ENCODE measurements at regions of chr19 and their contacts with region 1.

Region 1: DNA sequence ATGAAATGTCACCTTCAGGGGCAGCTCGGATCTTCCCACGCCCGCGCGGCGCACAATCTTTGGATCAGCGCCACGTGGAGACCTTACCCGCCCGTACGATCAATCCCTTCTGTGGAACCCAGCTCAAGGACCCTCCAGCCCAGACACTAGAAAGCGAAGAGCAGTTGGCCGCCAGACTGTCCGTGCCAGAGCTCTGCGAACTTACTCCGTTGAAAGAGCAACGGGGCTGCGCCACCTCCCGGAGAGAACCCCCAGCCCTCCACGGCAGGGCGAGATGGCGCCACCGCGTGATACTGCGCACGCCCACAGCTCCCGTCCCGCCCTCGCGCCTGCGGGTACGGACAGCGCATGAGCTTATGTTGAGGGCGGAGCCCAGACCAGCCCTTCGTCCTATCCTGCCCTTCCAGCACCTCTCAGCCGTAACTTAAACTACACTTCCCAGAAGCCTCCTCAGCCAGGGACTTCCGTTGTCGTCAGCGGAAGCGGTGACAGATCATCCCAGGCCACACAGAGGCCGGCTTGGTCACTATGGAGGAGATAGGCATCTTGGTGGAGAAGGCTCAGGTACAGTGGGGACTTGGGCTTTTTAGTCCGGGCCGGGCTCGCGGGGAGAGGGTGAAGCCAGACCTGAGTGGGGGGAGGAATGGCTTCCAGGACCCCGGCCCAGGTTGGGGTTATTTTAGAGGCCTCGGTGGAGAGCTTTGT is at the start of gene PSMC4:
- DNase-seq: peak; percentile 100
- ATAC-seq: peak; percentile 97 to 99
- H3K4me3 ChIP-seq: peak within 1 kb of the TSS; percentile 70
- H3K27ac ChIP-seq: peak within 1 kb of the TSS; percentile 91
- H3K4me1 ChIP-seq: peaks cover 18% of the 10 kb centered on the region
- CTCF ChIP-seq: peak; percentile 99
- EP300 ChIP-seq: no peak
- POLR2A ChIP-seq: peak; percentile 81
- RAD21 ChIP-seq: peak; percentile 99 to 100
- polyA plus RNA-seq, gene PSMC4: 192 and 208 TPM in 2 replicates

Region 2: GRCh38 chr19:39765091-39766076 is 205.4 kb before region 1 on chr19:
- CTCF ChIA-PET with region 1: interaction called, 33 read pairs
- POLR2A ChIA-PET with region 1: no interaction called
- DNase-seq: peak; percentile 41 to 82
- ATAC-seq: peak; percentile 55 to 77; a peak in 3 of 6 replicates
- H3K4me3 ChIP-seq: no peak overlapping the region
- H3K27ac ChIP-seq: no peak overlapping the region
- H3K4me1 ChIP-seq: no peaks in the 10 kb centered on the region
- CTCF ChIP-seq: peak; percentile 94
- EP300 ChIP-seq: no peak
- POLR2A ChIP-seq: no peak
- RAD21 ChIP-seq: peak; percentile 39 to 63; a peak in 3 of 5 replicates

Region 3: GRCh38 chr19:39846176-39846677 is 124.6 kb before region 1 on chr19 and contains the start of gene FBL:
- CTCF ChIA-PET with region 1: interaction called, 137 read pairs
- POLR2A ChIA-PET with region 1: interaction called, 28 read pairs
- DNase-seq: peak; percentile 96 to 100
- ATAC-seq: peak; percentile 79 to 91
- H3K4me3 ChIP-seq: peak within 1 kb of the TSS; percentile 86
- H3K27ac ChIP-seq: peak within 1 kb of the TSS; percentile 87 to 90
- H3K4me1 ChIP-seq: peaks cover 44% of the 10 kb centered on the region
- CTCF ChIP-seq: no peak; the same call in 2 of the 3 replicates
- EP300 ChIP-seq: no peak
- POLR2A ChIP-seq: peak; percentile 99
- RAD21 ChIP-seq: no peak
- polyA plus RNA-seq, gene FBL: 716 and 970 TPM in 2 replicates

Region 4: GRCh38 chr19:39906820-39907611 is 63.8 kb before region 1 on chr19:
- CTCF ChIA-PET with region 1: interaction called, 26 read pairs
- POLR2A ChIA-PET with region 1: interaction called, 12 read pairs
- DNase-seq: peak in 1 of 2 experiments; percentile 54
- ATAC-seq: no peak
- H3K4me3 ChIP-seq: no peak overlapping the region
- H3K27ac ChIP-seq: peak overlapping the region; percentile 75 to 86; a peak in 5 of 6 replicates
- H3K4me1 ChIP-seq: peaks cover 28% of the 10 kb centered on the region
- CTCF ChIP-seq: no peak; the same call in 2 of the 3 replicates
- EP300 ChIP-seq: no peak
- POLR2A ChIP-seq: no peak
- RAD21 ChIP-seq: no peak

Region 5: GRCh38 chr19:39941615-39942365 is 29.0 kb before region 1 on chr19:
- CTCF ChIA-PET with region 1: interaction called, 31 read pairs
- POLR2A ChIA-PET with region 1: interaction called, 10 read pairs
- DNase-seq: no peak
- ATAC-seq: no peak
- H3K4me3 ChIP-seq: no peak overlapping the region
- H3K27ac ChIP-seq: peak overlapping the region; percentile 82 to 87
- H3K4me1 ChIP-seq: peaks cover 62% of the 10 kb centered on the region
- CTCF ChIP-seq: no peak
- EP300 ChIP-seq: no peak
- POLR2A ChIP-seq: no peak
- RAD21 ChIP-seq: no peak

Region 6: DNA sequence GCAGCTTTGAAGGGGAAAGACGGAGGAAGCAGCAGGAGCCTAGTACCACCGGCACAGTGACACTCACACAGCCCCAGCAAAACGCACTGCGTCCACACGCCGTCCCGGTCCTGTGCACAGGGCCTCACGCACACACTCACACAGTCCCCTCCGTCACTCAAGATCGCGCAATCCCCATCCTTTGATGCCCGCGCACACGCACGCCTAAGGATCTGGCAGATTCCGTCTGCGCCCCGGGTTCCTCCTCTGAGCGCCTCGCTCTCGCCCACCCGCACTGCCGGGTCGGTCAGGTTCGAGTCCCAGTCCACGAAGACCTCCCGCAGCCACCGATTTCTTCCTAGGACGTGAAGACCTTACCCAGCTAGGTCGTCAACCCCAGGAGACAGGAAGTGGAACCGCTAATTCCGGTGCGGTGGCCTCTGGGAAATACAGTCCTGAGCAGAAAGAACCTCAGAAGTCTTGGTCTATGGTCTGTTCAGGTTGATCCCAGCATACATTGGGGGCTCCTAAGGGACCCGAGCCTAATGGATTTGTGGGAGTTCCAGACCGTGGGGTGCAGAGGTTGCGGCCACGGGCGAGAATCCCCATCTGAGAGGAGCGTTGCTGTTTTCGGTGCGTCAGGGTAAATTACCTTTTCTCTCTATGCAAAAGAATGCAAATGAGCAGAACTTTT is 85.1 kb after region 1 on chr19 and contains the start of gene ZNF780B:
- CTCF ChIA-PET with region 1: interaction called, 11 read pairs
- POLR2A ChIA-PET with region 1: interaction called, 4 read pairs
- DNase-seq: peak; percentile 84 to 93
- ATAC-seq: peak; percentile 97 to 99
- H3K4me3 ChIP-seq: peak within 1 kb of the TSS; percentile 62
- H3K27ac ChIP-seq: peak within 1 kb of the TSS; percentile 67 to 84
- H3K4me1 ChIP-seq: 0 out of 3 replicates have a peak, but pooled peaks cover 4% of the 10 kb centered on the region
- CTCF ChIP-seq: no peak
- EP300 ChIP-seq: no peak
- POLR2A ChIP-seq: peak; percentile 52; the same call in 1 of the 2 replicates
- RAD21 ChIP-seq: no peak
- polyA plus RNA-seq, gene ZNF780B: 10.0 and 15.7 TPM in 2 replicates

Region 7: GRCh38 chr19:40110570-40110969 is 139.7 kb after region 1 on chr19:
- CTCF ChIA-PET with region 1: no interaction called
- POLR2A ChIA-PET with region 1: no interaction called
- DNase-seq: no peak
- ATAC-seq: no peak
- H3K4me3 ChIP-seq: no peak overlapping the region
- H3K27ac ChIP-seq: no peak overlapping the region
- H3K4me1 ChIP-seq: no peaks in the 10 kb centered on the region
- CTCF ChIP-seq: no peak
- EP300 ChIP-seq: no peak
- POLR2A ChIP-seq: no peak
- RAD21 ChIP-seq: no peak

Region 8: GRCh38 chr19:40322871-40323615 is 352.2 kb after region 1 on chr19:
- CTCF ChIA-PET with region 1: no interaction called
- POLR2A ChIA-PET with region 1: no interaction called
- DNase-seq: no peak
- ATAC-seq: no peak; a peak in 2 of 6 replicates
- H3K4me3 ChIP-seq: no peak overlapping the region
- H3K27ac ChIP-seq: no peak overlapping the region
- H3K4me1 ChIP-seq: no peaks in the 10 kb centered on the region
- CTCF ChIP-seq: no peak
- EP300 ChIP-seq: no peak
- POLR2A ChIP-seq: no peak
- RAD21 ChIP-seq: no peak

Region 9: DNA sequence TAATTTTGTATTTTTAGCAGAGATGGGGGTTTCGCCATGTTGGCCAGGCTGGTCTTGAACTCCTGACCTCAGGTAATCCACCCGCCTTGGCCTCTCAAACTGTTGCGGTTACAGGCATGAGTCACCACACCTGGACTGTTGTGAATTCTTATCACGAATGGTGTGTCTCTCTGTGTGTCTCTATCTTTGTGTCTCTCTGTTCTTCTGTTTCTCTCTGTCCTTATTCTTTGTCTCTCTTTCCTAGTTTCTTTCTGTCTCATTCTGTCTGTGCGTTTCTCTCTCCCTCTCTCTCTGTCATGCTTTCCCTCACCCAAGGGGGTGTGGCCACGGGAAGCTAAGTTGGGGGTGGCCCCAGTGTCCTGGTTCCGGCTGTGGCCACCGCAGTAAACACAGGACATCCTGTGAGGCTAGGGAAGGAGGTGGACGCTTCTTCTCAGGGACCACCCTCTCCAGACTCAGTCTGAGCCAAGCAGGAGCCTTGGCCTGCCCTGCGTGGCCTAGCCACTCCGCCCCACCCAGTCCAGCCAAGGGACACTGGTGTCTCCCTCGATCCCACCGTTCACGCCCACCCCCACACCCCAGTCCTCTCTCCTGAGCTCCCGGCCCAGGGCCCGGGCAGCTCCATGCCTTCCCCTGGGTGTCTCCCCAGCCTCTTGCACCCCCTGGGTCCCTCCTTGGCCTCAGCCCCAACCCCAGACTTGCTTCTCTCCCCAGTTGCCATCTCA is 446.3 kb after region 1 on chr19:
- CTCF ChIA-PET with region 1: no interaction called
- POLR2A ChIA-PET with region 1: no interaction called
- DNase-seq: peak in 1 of 2 experiments; percentile 71
- ATAC-seq: peak in 1 of 2 experiments; percentile 0; a peak in 1 of 6 replicates
- H3K4me3 ChIP-seq: no peak overlapping the region
- H3K27ac ChIP-seq: peak overlapping the region; percentile 37 to 75
- H3K4me1 ChIP-seq: peaks cover 17% of the 10 kb centered on the region
- CTCF ChIP-seq: no peak
- EP300 ChIP-seq: no peak
- POLR2A ChIP-seq: no peak
- RAD21 ChIP-seq: no peak

Measured in A549 (cell line).